ENCODE measurements at regions of chr7 and their contacts with region 1.

Region 1: DNA sequence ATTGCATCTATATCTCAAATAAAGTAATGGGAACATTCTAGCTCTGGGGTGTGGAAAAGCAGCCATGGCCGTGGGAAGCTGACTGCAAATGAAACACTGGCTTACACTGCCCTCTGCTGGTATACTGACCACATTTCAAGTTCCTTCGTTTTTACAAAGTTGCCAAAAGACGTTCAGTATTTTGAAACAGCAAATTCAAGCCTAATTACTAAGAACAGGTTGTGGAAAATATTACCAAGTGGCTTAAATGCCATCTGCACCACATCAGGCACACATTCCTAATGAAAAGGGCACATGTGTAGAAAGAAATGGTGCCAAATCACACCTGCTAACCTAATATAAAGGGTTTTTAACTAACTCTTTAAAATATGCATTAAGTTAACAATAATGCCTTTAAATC is 83.9 kb downstream of the JAZF1 start:
- DNase-seq: peak; percentile 63 to 72
- ATAC-seq: peak; percentile 65 to 68; a peak in 3 of 6 replicates
- H3K4me3 ChIP-seq: no peak overlapping the region
- H3K27ac ChIP-seq: no peak overlapping the region
- H3K4me1 ChIP-seq: 0 out of 3 replicates have a peak, but pooled peaks cover 3% of the 10 kb centered on the region
- CTCF ChIP-seq: peak; percentile 92
- EP300 ChIP-seq: no peak
- POLR2A ChIP-seq: no peak
- RAD21 ChIP-seq: peak; percentile 88 to 94

Region 2: GRCh38 chr7:27210441-27211083 is 886.2 kb before region 1 on chr7:
- CTCF ChIA-PET with region 1: interaction called, 29 read pairs
- POLR2A ChIA-PET with region 1: no interaction called
- DNase-seq: peak; percentile 64 to 79
- ATAC-seq: peak; percentile 91 to 94
- H3K4me3 ChIP-seq: peak overlapping the region; percentile 33
- H3K27ac ChIP-seq: peak overlapping the region; percentile 50 to 69
- H3K4me1 ChIP-seq: peaks cover 12% of the 10 kb centered on the region; the same call in 2 of the 3 replicates
- CTCF ChIP-seq: peak; percentile 67
- EP300 ChIP-seq: no peak
- POLR2A ChIP-seq: no peak
- RAD21 ChIP-seq: peak; percentile 77 to 79

Region 3: DNA sequence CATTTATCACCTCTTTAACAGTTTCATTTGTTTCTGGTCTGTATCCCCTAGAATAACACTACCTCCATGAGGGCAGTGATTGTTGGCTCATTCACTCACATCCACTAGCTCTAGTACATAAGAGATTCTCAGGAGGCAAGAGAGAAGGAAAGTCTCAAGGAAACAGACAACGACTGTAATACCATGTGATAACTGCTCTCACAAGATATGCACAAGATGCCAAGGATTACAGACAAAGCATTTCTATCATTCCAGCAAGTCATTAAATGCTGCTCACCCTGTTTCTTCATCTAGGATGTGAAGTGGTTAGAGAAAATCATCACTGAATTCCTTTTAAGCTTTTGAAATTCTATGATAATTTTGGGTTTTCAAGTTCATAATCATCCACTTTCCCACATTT is 549.3 kb before region 1 on chr7:
- CTCF ChIA-PET with region 1: no interaction called
- POLR2A ChIA-PET with region 1: no interaction called
- DNase-seq: no peak
- ATAC-seq: no peak
- H3K4me3 ChIP-seq: no peak overlapping the region
- H3K27ac ChIP-seq: no peak overlapping the region
- H3K4me1 ChIP-seq: peaks cover 22% of the 10 kb centered on the region; the same call in 2 of the 3 replicates
- CTCF ChIP-seq: no peak
- EP300 ChIP-seq: no peak
- POLR2A ChIP-seq: no peak
- RAD21 ChIP-seq: no peak

Region 4: DNA sequence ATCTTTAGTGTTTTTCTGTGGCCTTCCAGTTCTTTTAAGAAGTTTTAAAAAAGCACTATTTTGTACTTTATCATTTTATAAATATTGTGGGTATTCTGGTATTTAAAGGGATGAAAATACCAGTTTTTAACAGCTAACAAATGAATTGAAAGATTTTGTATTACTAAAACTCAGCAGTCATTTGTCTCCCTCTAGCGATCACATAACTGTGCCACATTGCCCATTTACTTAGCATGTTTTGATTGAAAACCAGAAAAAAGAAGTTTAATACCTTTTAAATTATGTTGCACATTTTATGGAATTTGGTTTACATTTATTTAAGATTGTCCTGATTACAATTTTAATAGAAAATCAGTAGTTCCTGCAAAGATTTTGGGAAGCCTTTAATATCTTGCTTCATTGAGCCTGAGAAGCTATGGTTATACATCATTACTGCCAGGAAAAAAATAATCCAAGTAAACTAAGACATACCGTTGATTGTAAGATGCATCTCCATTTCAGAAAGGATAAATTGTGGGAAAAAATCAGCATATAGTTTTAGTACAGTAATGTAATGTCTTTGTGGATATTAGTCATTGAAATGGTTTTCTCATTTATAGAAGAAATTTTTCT is 321.9 kb before region 1 on chr7:
- CTCF ChIA-PET with region 1: interaction called, 15 read pairs
- POLR2A ChIA-PET with region 1: no interaction called
- DNase-seq: peak in 1 of 2 experiments; percentile 55
- ATAC-seq: peak in 1 of 2 experiments; percentile 67; a peak in 3 of 6 replicates
- H3K4me3 ChIP-seq: no peak overlapping the region
- H3K27ac ChIP-seq: no peak overlapping the region
- H3K4me1 ChIP-seq: peaks cover 26% of the 10 kb centered on the region
- CTCF ChIP-seq: peak; percentile 88
- EP300 ChIP-seq: no peak
- POLR2A ChIP-seq: no peak
- RAD21 ChIP-seq: peak; percentile 84 to 88

Region 5: GRCh38 chr7:28013019-28013418 is 83.7 kb before region 1 on chr7:
- CTCF ChIA-PET with region 1: interaction called, 12 read pairs
- POLR2A ChIA-PET with region 1: no interaction called
- DNase-seq: no peak
- ATAC-seq: no peak
- H3K4me3 ChIP-seq: no peak overlapping the region
- H3K27ac ChIP-seq: no peak overlapping the region
- H3K4me1 ChIP-seq: peaks cover 5% of the 10 kb centered on the region; the same call in 1 of the 3 replicates
- CTCF ChIP-seq: no peak
- EP300 ChIP-seq: no peak
- POLR2A ChIP-seq: no peak
- RAD21 ChIP-seq: no peak

Region 6: GRCh38 chr7:28062197-28062991 is 34.3 kb before region 1 on chr7:
- CTCF ChIA-PET with region 1: interaction called, 18 read pairs
- POLR2A ChIA-PET with region 1: no interaction called
- DNase-seq: peak; percentile 55 to 81
- ATAC-seq: peak; percentile 95 to 96
- H3K4me3 ChIP-seq: no peak overlapping the region
- H3K27ac ChIP-seq: peak overlapping the region; percentile 68 to 84
- H3K4me1 ChIP-seq: peaks cover 61% of the 10 kb centered on the region
- CTCF ChIP-seq: peak; percentile 75
- EP300 ChIP-seq: no peak
- POLR2A ChIP-seq: no peak
- RAD21 ChIP-seq: peak; percentile 68 to 78

Region 7: GRCh38 chr7:28078036-28078901 is 18.4 kb before region 1 on chr7:
- CTCF ChIA-PET with region 1: interaction called, 117 read pairs
- POLR2A ChIA-PET with region 1: no interaction called
- DNase-seq: peak; percentile 37 to 69
- ATAC-seq: peak; percentile 75; a peak in 5 of 6 replicates
- H3K4me3 ChIP-seq: no peak overlapping the region
- H3K27ac ChIP-seq: peak overlapping the region; percentile 69 to 71
- H3K4me1 ChIP-seq: peaks cover 37% of the 10 kb centered on the region
- CTCF ChIP-seq: peak; percentile 97
- EP300 ChIP-seq: no peak
- POLR2A ChIP-seq: no peak
- RAD21 ChIP-seq: peak; percentile 85 to 90

Measured in A549 (cell line).